HEK293 (cell line): ENCODE measurements at regions of chr11 and their contacts with region 1.

Region 1: GRCh38 chr11:124865921-124866583 is 820 bp downstream of the ROBO3 start:
- H3K4me3 ChIP-seq: peak overlapping the region; percentile 13
- H3K27ac ChIP-seq: no peak overlapping the region
- H3K4me1 ChIP-seq: no peaks in the 10 kb centered on the region
- CTCF ChIP-seq: peak; percentile 66; the same call in 1 of the 2 replicates

Region 2: DNA sequence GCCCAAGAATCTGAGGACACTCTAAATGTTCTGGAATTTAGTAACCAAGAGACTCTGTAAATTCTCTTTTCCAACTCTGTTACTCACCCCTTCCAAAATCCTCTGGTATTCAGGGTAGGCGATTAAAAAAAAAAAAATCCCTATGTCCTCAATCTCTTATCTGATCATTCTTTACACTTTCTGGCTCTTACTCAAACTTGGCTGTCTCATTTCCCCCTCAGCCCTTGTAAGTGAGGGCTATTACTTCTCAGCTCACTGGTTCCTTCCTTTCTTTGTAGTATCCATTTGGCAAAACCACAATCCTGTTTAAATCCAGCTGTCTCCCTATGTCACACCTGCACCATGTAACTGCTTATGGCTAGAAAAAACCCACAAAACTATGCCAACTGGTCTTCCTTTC is 53.2 kb before region 1 on chr11:
- CTCF ChIA-PET with region 1: no interaction called
- POLR2A ChIA-PET with region 1: no interaction called
- H3K4me3 ChIP-seq: no peak overlapping the region
- H3K27ac ChIP-seq: no peak overlapping the region
- H3K4me1 ChIP-seq: no peaks in the 10 kb centered on the region
- CTCF ChIP-seq: no peak

Region 3: DNA sequence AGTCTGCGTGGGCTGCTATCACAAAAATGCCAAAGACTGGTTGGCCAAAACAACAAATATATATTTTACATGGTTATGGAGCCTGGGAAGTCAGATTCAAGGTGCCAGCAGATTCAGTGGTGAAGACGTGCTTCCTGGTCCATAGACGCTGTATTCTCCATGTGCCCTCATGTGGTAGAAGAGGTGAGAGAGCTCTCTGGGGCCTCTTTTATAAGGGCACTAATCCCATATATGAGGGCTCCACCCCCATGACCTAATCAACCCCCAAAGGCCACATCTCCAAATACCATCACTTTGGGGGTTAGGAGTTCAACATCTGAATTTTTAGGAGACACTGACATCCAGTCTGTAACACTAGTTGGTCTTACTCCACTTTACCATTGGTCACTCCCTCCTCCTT is 10.6 kb before region 1 on chr11:
- CTCF ChIA-PET with region 1: interaction called, 20 read pairs
- POLR2A ChIA-PET with region 1: no interaction called
- H3K4me3 ChIP-seq: no peak overlapping the region
- H3K27ac ChIP-seq: no peak overlapping the region
- H3K4me1 ChIP-seq: no peaks in the 10 kb centered on the region
- CTCF ChIP-seq: no peak

Region 4: DNA sequence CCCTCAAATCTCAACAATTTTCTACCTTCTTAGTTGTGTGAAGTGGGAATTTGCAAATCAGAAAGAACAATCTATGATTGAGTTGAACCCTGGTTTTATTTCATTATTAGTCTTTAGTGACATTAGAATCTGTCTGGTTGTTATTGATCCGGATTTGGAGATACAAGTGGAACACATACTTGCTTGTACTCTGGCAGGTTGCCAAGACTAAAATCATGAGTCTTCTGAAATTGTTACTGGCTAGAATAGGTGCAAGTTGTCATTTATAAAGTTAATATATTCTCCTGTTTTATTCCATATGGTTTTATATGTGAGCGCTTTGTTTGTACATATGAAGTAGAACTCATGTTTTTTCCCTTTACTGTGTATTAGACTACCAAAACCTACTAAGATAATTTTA is 110.9 kb after region 1 on chr11:
- CTCF ChIA-PET with region 1: no interaction called
- POLR2A ChIA-PET with region 1: no interaction called
- H3K4me3 ChIP-seq: no peak overlapping the region
- H3K27ac ChIP-seq: no peak overlapping the region
- H3K4me1 ChIP-seq: no peaks in the 10 kb centered on the region
- CTCF ChIP-seq: no peak